ENCODE measurements at regions of chr19 and their contacts with region 1.

Region 1: GRCh38 chr19:46614114-46614722 is 10.7 kb downstream of the PTGIR start:
- DNase-seq: peak; percentile 88
- ATAC-seq: peak; percentile 52
- H3K4me3 Mint-ChIP-seq: no peak overlapping the region
- H3K27ac Mint-ChIP-seq: peak overlapping the region; percentile 78
- H3K4me1 Mint-ChIP-seq: peaks cover 81% of the 10 kb centered on the region
- H3K27me3 Mint-ChIP-seq: no peaks in the 10 kb centered on the region

Region 2: GRCh38 chr19:46520616-46521015 is 93.6 kb before region 1 on chr19:
- CTCF ChIA-PET with region 1: interaction called, 19 read pairs
- POLR2A ChIA-PET with region 1: interaction called, 4 read pairs
- DNase-seq: no peak
- ATAC-seq: no peak
- H3K4me3 Mint-ChIP-seq: no peak overlapping the region
- H3K27ac Mint-ChIP-seq: peak overlapping the region; percentile 67
- H3K4me1 Mint-ChIP-seq: peaks cover 73% of the 10 kb centered on the region
- H3K27me3 Mint-ChIP-seq: no peaks in the 10 kb centered on the region

Region 3: GRCh38 chr19:46634045-46634655 is 19.9 kb after region 1 on chr19:
- CTCF ChIA-PET with region 1: interaction called, 245 read pairs
- POLR2A ChIA-PET with region 1: interaction called, 21 read pairs
- DNase-seq: peak; percentile 96
- ATAC-seq: peak; percentile 70
- H3K4me3 Mint-ChIP-seq: peak overlapping the region; percentile 73
- H3K27ac Mint-ChIP-seq: peak overlapping the region; percentile 81
- H3K4me1 Mint-ChIP-seq: peaks cover 27% of the 10 kb centered on the region
- H3K27me3 Mint-ChIP-seq: peaks cover 2% of the 10 kb centered on the region

Measured in activated CD8-positive, alpha-beta T cell treated with anti-CD3 and anti-CD28 coated beads, Interleukin-2, amount 10 ng/mL, durations not matched to agents 7 days and 5 days (primary cell).